Dorsolateral prefrontal cortex (tissue), 120 donors: ENCODE measurements at regions of chr11 and their contacts with region 1.

Region 1: GRCh38 chr11:60831143-60831500 is 10.8 kb upstream of the CCDC86 start:
- DNase-seq: peak; percentile 83 to 93 (median 90)
- H3K4me3 ChIP-seq: peak overlapping the region in 16 of 59 donors; percentile 16 to 46 (median 26)
- H3K27ac ChIP-seq: peak overlapping the region in 1 of 59 donors; percentile 47
- H3K27me3 ChIP-seq: no peaks in the 10 kb centered on the region
- CTCF ChIP-seq: peak; percentile 91 to 100 (median 98)

Region 2: GRCh38 chr11:60725592-60725991 is 105.5 kb before region 1 on chr11:
- intact Hi-C with region 1: no loop called
- DNase-seq: no peak
- H3K4me3 ChIP-seq: no peak overlapping the region
- H3K27ac ChIP-seq: no peak overlapping the region
- H3K27me3 ChIP-seq: peaks cover 0 to 10% (median 0%) of the 10 kb centered on the region in 45 donors
- CTCF ChIP-seq: no peak

Region 3: DNA sequence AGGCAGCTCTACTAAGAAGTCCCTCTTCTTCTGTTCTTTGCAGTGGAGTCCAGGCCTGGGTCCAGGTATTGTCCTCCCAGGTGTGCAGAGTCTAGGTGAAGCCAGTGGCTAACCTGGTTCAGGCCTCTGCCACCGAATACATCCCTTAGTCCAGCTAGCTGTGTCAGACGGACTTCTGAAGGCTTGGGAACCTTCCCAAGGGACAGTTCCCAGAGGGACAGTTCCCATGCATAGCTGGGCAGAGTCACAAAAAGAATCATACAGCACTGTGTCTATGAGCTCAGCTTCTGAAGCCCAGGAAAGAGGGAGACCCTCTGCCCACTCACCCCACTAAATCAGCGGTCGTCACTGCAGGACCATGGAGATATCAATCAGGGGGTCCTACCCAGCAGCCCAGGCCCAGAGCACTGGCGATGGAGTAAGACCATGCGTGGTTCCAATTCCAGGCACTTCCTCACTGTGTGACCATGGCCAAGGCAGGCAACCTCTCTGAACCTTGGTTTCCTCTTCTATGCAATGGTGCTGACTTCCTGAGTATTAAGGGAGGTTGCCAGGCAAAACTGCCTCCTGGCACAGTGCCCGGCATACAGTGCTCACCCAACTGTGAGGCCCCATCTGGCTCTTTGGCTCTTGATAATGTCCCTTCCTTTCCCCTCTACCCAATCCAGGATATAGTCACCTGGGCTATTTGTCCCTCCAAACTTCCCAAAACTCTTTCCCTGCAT is 42.6 kb before region 1 on chr11:
- intact Hi-C with region 1: no loop called
- DNase-seq: peak in 1 of 10 donors; percentile 75
- H3K4me3 ChIP-seq: no peak overlapping the region
- H3K27ac ChIP-seq: no peak overlapping the region
- H3K27me3 ChIP-seq: no peaks in the 10 kb centered on the region
- CTCF ChIP-seq: no peak

Region 4: GRCh38 chr11:60887556-60887955 is 56.4 kb after region 1 on chr11:
- intact Hi-C with region 1: loop called in 1 of 2 experiments (anchors 1 kb)
- DNase-seq: peak in 3 of 10 donors; percentile 45 to 64 (median 48)
- H3K4me3 ChIP-seq: no peak overlapping the region
- H3K27ac ChIP-seq: no peak overlapping the region
- H3K27me3 ChIP-seq: no peaks in the 10 kb centered on the region
- CTCF ChIP-seq: peak in 55 of 56 donors; percentile 19 to 72 (median 52)

Region 5: GRCh38 chr11:60899046-60899936 is 68.2 kb after region 1 on chr11:
- intact Hi-C with region 1: loop called in 1 of 2 experiments (anchors 5 kb)
- DNase-seq: peak in 1 of 10 donors; percentile 52
- H3K4me3 ChIP-seq: no peak overlapping the region
- H3K27ac ChIP-seq: peak overlapping the region in 5 of 59 donors; percentile 14 to 44 (median 29)
- H3K27me3 ChIP-seq: no peaks in the 10 kb centered on the region
- CTCF ChIP-seq: peak; percentile 80 to 99 (median 93)

Region 6: GRCh38 chr11:60951899-60952741 is 121.0 kb after region 1 on chr11 and contains the start of gene SLC15A3:
- intact Hi-C with region 1: no loop called
- DNase-seq: peak in 3 of 10 donors; percentile 36 to 60 (median 50)
- H3K4me3 ChIP-seq: peak within 1 kb of the TSS in 56 of 59 donors; percentile 19 to 63 (median 40)
- H3K27ac ChIP-seq: peak within 1 kb of the TSS in 56 of 59 donors; percentile 11 to 91 (median 67)
- H3K27me3 ChIP-seq: peaks cover 0 to 41% (median 0%) of the 10 kb centered on the region in 45 donors
- CTCF ChIP-seq: no peak
- total RNA-seq, gene SLC15A3: 3.9 to 21.8 (median 9.7) TPM

Region 7: DNA sequence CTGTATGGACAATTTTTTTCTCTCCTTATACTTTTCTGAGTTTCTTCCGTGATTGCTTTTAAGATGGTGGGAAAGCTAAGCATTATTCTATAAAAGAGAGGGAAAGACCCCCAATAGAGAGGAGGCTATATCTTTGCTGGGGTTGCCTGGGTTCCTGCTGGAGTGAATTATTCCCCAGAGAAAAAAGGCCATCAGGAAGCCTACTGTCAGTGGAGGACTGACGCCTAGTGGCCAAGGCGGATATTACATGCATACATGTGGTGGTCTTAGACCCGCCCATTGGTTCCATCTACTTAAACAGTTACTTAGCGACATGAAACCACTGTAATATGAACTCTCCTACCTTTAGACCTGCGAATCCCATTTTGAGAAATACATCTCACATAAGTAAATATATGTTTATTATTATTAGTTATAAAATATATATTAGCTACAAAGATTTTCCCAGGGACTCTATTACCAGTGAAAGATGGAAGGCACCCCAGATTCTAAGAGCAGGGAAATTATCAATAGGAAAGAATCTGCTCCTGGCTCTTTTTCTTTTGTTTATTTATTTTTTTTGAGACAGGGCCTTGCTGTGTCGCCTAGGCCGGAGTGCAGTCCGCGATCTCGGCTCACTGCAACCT is 356.5 kb after region 1 on chr11:
- intact Hi-C with region 1: loop called (anchors 2 to 10 kb)
- DNase-seq: peak in 9 of 10 donors; percentile 53 to 82 (median 65)
- H3K4me3 ChIP-seq: no peak overlapping the region
- H3K27ac ChIP-seq: no peak overlapping the region
- H3K27me3 ChIP-seq: peaks cover 0 to 4% (median 0%) of the 10 kb centered on the region in 45 donors
- CTCF ChIP-seq: peak; percentile 82 to 98 (median 93)

Region 8: DNA sequence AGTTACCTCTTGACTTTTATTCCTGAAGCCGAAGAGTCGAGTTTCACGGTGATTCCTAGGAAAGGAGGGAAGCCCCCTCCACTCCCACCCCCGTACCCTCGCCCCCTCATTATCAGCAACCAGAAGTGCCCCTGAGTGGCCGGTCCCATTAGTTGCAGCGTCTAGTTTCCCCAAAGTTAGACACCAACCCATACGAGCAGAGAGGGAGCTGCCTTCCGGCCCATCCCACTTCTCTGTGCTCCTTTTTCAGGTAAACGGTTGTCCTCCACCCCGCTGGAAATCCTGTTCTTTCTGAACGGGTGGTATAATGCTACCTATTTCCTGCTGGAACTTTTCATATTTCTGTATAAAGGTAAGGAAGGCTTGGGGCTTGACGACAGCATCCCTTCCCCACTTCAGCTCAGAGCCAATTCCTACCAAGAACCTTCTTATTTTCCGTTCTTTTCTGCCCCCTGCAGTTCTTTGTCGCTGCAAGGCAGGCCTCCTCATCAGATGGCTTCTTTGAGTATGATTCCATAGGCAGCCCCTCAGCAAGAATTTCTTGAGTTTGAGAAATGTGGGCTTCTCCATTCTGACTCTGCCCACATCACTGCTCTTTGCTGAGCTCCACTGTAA is 562.0 kb after region 1 on chr11:
- intact Hi-C with region 1: no loop called
- DNase-seq: no peak
- H3K4me3 ChIP-seq: peak overlapping the region; percentile 48 to 90 (median 80)
- H3K27ac ChIP-seq: peak overlapping the region in 49 of 59 donors; percentile 9 to 91 (median 74)
- H3K27me3 ChIP-seq: no peaks in the 10 kb centered on the region
- CTCF ChIP-seq: peak in 9 of 56 donors; percentile 6 to 28 (median 14)